Transverse colon (tissue), 4 donors: ENCODE measurements at regions of chrX and their contacts with region 1.

Region 1: GRCh38 chrX:27751976-27752375 is 55.8 kb upstream of the MAGEB10 start:
- DNase-seq: no peak
- H3K4me3 ChIP-seq: no peak overlapping the region
- H3K27ac ChIP-seq: no peak overlapping the region
- H3K4me1 ChIP-seq: no peaks in the 10 kb centered on the region
- H3K27me3 ChIP-seq: no peaks in the 10 kb centered on the region
- CTCF ChIP-seq: no peak
- EP300 ChIP-seq: no peak
- POLR2A ChIP-seq: no peak

Region 2: GRCh38 chrX:27519226-27519625 is 232.8 kb before region 1 on chrX:
- in situ Hi-C with region 1: no loop called
- intact Hi-C with region 1: no loop called
- DNase-seq: no peak
- H3K4me3 ChIP-seq: no peak overlapping the region
- H3K27ac ChIP-seq: no peak overlapping the region
- H3K4me1 ChIP-seq: no peaks in the 10 kb centered on the region
- H3K27me3 ChIP-seq: no peaks in the 10 kb centered on the region
- CTCF ChIP-seq: no peak
- EP300 ChIP-seq: no peak
- POLR2A ChIP-seq: no peak

Region 3: GRCh38 chrX:27767387-27767786 is 15.4 kb after region 1 on chrX:
- in situ Hi-C with region 1: no loop called
- intact Hi-C with region 1: loop called (anchors 1 kb)
- DNase-seq: no peak
- H3K4me3 ChIP-seq: no peak overlapping the region
- H3K27ac ChIP-seq: no peak overlapping the region
- H3K4me1 ChIP-seq: no peaks in the 10 kb centered on the region
- H3K27me3 ChIP-seq: no peaks in the 10 kb centered on the region
- CTCF ChIP-seq: no peak
- EP300 ChIP-seq: no peak
- POLR2A ChIP-seq: no peak